ENCODE measurements at regions of chr7 and their contacts with region 1.

Region 1: DNA sequence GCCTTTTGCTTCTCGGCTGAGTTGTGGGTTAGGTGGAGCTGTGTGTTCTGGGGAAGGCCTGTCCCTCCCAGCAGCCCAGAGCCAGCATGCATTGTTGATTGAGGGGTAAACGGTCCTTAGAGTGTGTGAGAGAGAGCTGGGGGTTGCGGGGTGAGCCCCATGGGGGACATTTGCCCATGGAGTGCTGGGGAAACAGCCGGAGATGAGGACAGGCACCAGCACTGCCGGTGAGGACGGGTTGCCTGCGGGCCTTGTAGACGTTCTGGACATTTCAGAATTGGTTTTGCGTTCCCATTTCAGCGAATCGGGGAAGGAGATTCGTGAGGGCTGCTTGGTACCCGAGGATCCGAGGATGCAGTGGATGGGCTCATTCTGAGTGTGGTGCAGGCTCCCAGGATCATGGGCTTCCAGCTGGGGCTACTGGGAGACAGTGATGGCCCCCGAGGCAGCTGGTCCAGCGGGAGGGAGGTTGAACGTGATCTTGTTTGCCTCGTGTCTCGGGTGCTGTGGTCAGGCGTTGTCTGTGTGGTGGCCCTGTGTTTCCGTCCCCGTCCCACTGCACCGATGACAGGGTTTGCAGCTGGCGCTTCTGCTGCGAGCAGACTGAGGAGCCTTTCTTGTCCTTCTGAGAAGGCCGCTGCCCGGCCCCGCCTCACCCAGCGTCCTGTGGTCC is 113.9 kb downstream of the CYTH3 start:
- DNase-seq: no peak
- H3K4me3 ChIP-seq: no peak overlapping the region
- H3K27ac ChIP-seq: no peak overlapping the region
- H3K4me1 ChIP-seq: no peaks in the 10 kb centered on the region
- H3K27me3 ChIP-seq: no peaks in the 10 kb centered on the region
- CTCF ChIP-seq: no peak
- POLR2A ChIP-seq: no peak

Region 2: GRCh38 chr7:6117312-6117932 is 41.1 kb before region 1 on chr7:
- intact Hi-C with region 1: no loop called
- DNase-seq: no peak
- H3K4me3 ChIP-seq: no peak overlapping the region
- H3K27ac ChIP-seq: no peak overlapping the region
- H3K4me1 ChIP-seq: no peaks in the 10 kb centered on the region
- H3K27me3 ChIP-seq: no peaks in the 10 kb centered on the region
- CTCF ChIP-seq: no peak
- POLR2A ChIP-seq: no peak

Region 3: DNA sequence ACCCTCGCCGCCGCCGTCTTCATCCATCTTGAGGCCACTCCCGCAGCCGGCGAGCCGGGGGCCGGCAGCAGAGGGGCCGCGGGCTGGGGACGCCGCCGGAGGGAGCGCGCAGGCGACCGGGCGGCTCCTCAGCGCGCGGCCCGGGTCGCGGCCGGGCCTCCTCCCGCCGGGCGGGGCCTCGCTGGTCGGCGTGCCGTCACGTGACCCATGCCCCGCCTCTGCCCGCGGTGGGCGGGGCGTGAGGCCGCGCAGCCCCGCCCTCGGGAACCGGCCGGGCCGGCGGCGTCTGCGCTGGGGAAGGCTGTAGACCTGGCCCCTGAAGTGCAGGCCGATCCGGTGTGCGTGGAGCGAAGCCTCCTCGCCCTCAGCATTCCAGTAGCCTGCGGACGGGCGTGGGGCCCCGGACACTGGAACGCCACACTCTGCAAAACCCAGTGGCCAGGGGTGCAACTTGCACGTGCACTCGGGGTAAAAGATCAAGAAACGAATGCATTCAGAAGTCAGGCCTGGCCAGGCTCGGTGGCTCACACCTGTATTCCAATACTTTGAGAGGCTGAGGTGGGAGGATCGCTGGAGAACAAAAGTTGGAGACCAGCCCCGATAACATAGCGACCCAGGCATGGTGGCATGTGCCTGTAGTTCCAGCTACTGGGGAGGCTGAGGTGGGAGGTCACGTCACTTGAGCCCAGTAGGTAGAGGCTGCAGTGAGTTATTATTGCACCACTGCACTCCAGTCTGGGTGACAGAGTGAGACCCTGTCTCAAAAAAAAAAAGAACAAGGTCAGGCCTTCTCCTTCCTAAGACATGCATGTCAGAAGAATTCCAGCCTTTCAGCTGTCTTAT is 114.1 kb after region 1 on chr7 and contains the start of gene CYTH3:
- intact Hi-C with region 1: loop called (anchors 5 kb)
- DNase-seq: peak; percentile 76
- H3K4me3 ChIP-seq: peak within 1 kb of the TSS; percentile 74 to 89
- H3K27ac ChIP-seq: peak within 1 kb of the TSS; percentile 45 to 58
- H3K4me1 ChIP-seq: peaks cover 15% of the 10 kb centered on the region
- H3K27me3 ChIP-seq: no peaks in the 10 kb centered on the region
- CTCF ChIP-seq: no peak
- POLR2A ChIP-seq: no peak
- total RNA-seq, gene CYTH3: 12.3 to 37.7 TPM

Region 4: GRCh38 chr7:6323967-6324701 is 165.6 kb after region 1 on chr7:
- intact Hi-C with region 1: loop called (anchors 2 kb)
- DNase-seq: no peak
- H3K4me3 ChIP-seq: no peak overlapping the region
- H3K27ac ChIP-seq: no peak overlapping the region
- H3K4me1 ChIP-seq: no peaks in the 10 kb centered on the region
- H3K27me3 ChIP-seq: no peaks in the 10 kb centered on the region
- CTCF ChIP-seq: no peak
- POLR2A ChIP-seq: no peak

Region 5: GRCh38 chr7:6435486-6436384 is 277.2 kb after region 1 on chr7:
- intact Hi-C with region 1: loop called (anchors 10 kb)
- DNase-seq: peak; percentile 59
- H3K4me3 ChIP-seq: no peak overlapping the region
- H3K27ac ChIP-seq: no peak overlapping the region
- H3K4me1 ChIP-seq: no peaks in the 10 kb centered on the region
- H3K27me3 ChIP-seq: no peaks in the 10 kb centered on the region
- CTCF ChIP-seq: peak; percentile 85 to 95 (median 92)
- POLR2A ChIP-seq: no peak